Activated T-helper 2 cell treated with anti-CD3 and anti-CD28 coated beads, Interferon-gamma antibody, Interleukin-2, Interleukin-4, amounts not matched to agents 10 μg/mL and 5 μg/mL and 100 μg/mL, durations not matched to agents 14 hours and 24 hours and 36 hours (primary cell): ENCODE measurements at regions of chr7 and their contacts with region 1.

Region 1: GRCh38 chr7:12490117-12490688 is 80.3 kb upstream of the SCIN start:
- DNase-seq: no peak
- H3K4me3 Mint-ChIP-seq: no peak overlapping the region
- H3K27ac Mint-ChIP-seq: no peak overlapping the region
- H3K4me1 Mint-ChIP-seq: no peaks in the 10 kb centered on the region
- H3K27me3 Mint-ChIP-seq: peaks cover 5% of the 10 kb centered on the region

Region 2: DNA sequence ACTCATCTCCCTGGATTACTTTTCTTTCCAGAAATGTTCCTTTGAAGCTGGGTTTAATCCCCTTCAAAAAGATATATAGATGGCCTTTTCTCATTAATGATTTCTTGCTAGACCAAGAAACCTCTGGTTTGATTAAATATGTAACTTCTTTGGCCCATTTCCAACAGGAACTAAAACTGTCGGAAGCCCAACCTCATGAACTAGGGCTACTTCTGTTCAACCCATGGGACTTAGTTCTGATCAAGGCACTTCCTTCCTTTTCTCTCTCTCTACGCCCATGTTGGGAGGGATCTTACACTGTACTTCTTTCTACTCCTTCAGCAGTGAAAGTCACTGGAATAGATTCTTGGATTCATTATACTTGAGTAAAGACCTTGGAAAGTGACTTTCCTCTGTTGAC is 195.5 kb before region 1 on chr7:
- intact Hi-C with region 1: no loop called
- DNase-seq: no peak
- H3K4me3 Mint-ChIP-seq: no peak overlapping the region
- H3K27ac Mint-ChIP-seq: no peak overlapping the region
- H3K4me1 Mint-ChIP-seq: no peaks in the 10 kb centered on the region
- H3K27me3 Mint-ChIP-seq: peaks cover 4% of the 10 kb centered on the region

Region 3: DNA sequence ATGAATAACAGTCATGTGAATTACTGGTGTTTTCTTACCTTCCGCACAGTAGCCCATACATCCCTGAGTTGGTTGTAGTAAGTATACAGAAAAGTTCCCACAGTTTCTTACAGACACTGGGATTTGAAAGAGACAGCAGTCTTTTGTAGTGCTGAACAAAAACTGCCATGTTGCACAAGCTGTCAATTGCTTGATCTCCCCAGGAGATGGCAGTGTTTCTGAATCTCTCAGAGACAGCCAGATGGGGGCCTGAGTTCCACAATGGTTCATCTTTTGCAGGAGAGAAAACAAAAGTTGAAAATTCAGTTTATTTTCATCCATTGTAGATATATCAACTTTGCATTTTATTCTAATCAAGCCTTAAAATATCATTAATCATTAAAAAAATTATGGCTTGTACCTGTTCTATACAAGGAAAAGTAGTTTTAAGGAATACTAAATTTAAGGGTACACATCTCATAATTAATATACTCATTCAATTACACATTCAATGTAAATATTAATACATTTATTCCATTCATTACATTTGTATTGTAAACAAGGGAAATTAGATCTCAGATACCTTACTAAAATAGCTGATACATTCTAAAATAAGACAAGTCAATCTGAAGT is 101.0 kb before region 1 on chr7:
- intact Hi-C with region 1: loop called (anchors 5 kb)
- DNase-seq: no peak
- H3K4me3 Mint-ChIP-seq: no peak overlapping the region
- H3K27ac Mint-ChIP-seq: no peak overlapping the region
- H3K4me1 Mint-ChIP-seq: no peaks in the 10 kb centered on the region
- H3K27me3 Mint-ChIP-seq: no peaks in the 10 kb centered on the region

Region 4: GRCh38 chr7:12434009-12434642 is 56.1 kb before region 1 on chr7:
- intact Hi-C with region 1: loop called (anchors 2 kb)
- DNase-seq: no peak
- H3K4me3 Mint-ChIP-seq: no peak overlapping the region
- H3K27ac Mint-ChIP-seq: no peak overlapping the region
- H3K4me1 Mint-ChIP-seq: no peaks in the 10 kb centered on the region
- H3K27me3 Mint-ChIP-seq: no peaks in the 10 kb centered on the region

Region 5: GRCh38 chr7:12458520-12459131 is 31.6 kb before region 1 on chr7:
- intact Hi-C with region 1: loop called (anchors 1 kb)
- DNase-seq: no peak
- H3K4me3 Mint-ChIP-seq: no peak overlapping the region
- H3K27ac Mint-ChIP-seq: no peak overlapping the region
- H3K4me1 Mint-ChIP-seq: no peaks in the 10 kb centered on the region
- H3K27me3 Mint-ChIP-seq: peaks cover 3% of the 10 kb centered on the region